Activated T-helper 1 cell treated with anti-CD3 and anti-CD28 coated beads, Interleukin-12 subunit alpha, Interleukin-12 subunit beta, Interleukin-2, Interleukin-4 antibody, amounts not matched to agents 30 ng/mL and 10 ng/mL and 1 ng/mL, durations not matched to agents 14 hours and 24 hours and 36 hours (primary cell): ENCODE measurements at regions of chr12 and their contacts with region 1.

Region 1: DNA sequence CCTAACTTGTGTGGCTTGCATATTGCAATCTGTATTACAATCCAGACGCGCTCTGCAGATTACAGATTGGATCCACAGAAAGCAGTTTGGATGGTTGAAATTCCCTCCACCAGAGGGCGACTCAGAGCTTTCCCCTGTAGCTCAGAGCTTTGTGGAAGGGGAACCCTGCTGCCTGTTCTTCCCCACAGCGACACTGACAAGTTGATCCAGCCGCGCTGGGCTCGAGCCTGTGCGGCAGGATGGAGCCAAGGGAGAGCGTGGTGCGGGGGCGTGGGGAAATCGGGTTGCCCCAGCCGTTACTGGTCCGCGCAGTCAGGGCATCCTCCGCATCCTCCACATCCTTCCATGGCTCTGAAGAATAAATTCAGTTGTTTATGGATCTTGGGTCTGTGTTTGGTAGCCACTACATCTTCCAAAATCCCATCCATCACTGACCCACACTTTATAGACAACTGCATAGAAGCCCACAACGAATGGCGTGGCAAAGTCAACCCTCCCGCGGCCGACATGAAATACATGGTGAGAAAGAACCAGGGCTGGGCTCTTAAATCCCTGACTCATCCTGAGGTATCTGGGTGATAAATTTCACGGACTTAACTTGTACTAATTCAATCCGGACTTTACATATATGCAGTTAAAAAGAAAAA is at the start of gene GLIPR1L1:
- DNase-seq: peak; percentile 67
- H3K4me3 Mint-ChIP-seq: peak within 1 kb of the TSS; percentile 70
- H3K27ac Mint-ChIP-seq: no peak within 1 kb of the TSS
- H3K4me1 Mint-ChIP-seq: peaks cover 36% of the 10 kb centered on the region
- H3K27me3 Mint-ChIP-seq: peaks cover 35% of the 10 kb centered on the region
- total RNA-seq, gene GLIPR1L1: not detected in 2 replicates

Region 2: GRCh38 chr12:74689071-74689655 is 645.3 kb before region 1 on chr12:
- intact Hi-C with region 1: loop called (anchors 1 kb)
- DNase-seq: no peak
- H3K4me3 Mint-ChIP-seq: no peak overlapping the region
- H3K27ac Mint-ChIP-seq: no peak overlapping the region
- H3K4me1 Mint-ChIP-seq: no peaks in the 10 kb centered on the region
- H3K27me3 Mint-ChIP-seq: peaks cover 2% of the 10 kb centered on the region

Region 3: GRCh38 chr12:74945771-74946198 is 388.7 kb before region 1 on chr12:
- intact Hi-C with region 1: no loop called
- DNase-seq: no peak
- H3K4me3 Mint-ChIP-seq: no peak overlapping the region
- H3K27ac Mint-ChIP-seq: no peak overlapping the region
- H3K4me1 Mint-ChIP-seq: peaks cover 8% of the 10 kb centered on the region
- H3K27me3 Mint-ChIP-seq: no peaks in the 10 kb centered on the region

Region 4: DNA sequence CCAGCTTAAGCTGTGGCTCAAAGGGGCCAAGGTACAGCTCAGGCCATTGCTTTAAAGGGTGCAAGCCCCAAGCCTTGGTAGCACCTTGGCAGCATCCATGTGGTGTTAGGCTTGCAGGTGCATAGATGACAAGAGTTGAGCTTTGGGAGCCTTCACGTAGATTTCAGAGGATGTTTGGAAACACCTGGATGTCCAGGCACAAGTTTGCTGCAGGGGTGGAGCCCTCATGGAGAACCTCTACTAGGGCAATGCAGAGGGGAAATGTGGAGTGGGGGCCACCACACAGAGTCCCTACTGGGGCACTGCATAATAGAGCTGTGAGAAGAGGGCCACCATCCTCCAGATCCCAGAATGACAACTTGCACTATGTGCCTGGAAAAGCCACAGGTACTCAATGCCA is 94.3 kb after region 1 on chr12:
- intact Hi-C with region 1: no loop called
- DNase-seq: no peak
- H3K4me3 Mint-ChIP-seq: no peak overlapping the region
- H3K27ac Mint-ChIP-seq: no peak overlapping the region
- H3K4me1 Mint-ChIP-seq: no peaks in the 10 kb centered on the region
- H3K27me3 Mint-ChIP-seq: peaks cover 2% of the 10 kb centered on the region

Region 5: GRCh38 chr12:75505706-75506312 is 171.3 kb after region 1 on chr12:
- intact Hi-C with region 1: loop called (anchors 1 kb)
- DNase-seq: no peak
- H3K4me3 Mint-ChIP-seq: no peak overlapping the region
- H3K27ac Mint-ChIP-seq: no peak overlapping the region
- H3K4me1 Mint-ChIP-seq: peaks cover 48% of the 10 kb centered on the region
- H3K27me3 Mint-ChIP-seq: no peaks in the 10 kb centered on the region

Region 6: DNA sequence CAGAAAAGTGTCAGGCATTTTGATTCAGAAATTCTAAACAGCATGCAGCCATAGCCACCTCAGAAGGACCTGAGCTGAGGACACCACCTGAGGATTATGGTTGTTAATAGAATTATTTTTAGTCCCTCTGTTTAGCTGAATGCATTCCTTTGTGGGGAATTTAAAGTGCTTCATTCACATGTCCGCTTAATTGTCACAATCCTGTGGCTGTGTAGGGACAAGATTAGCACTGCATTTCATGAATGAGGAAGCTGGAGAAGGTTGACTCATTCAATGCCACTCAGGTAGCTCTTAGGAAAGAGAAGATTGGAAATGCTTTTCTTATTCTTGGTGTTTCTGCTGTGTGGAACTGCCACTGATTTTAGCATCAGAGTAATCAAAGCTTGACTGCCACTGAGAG is 218.9 kb after region 1 on chr12:
- intact Hi-C with region 1: no loop called
- DNase-seq: no peak
- H3K4me3 Mint-ChIP-seq: no peak overlapping the region
- H3K27ac Mint-ChIP-seq: no peak overlapping the region
- H3K4me1 Mint-ChIP-seq: no peaks in the 10 kb centered on the region
- H3K27me3 Mint-ChIP-seq: peaks cover 21% of the 10 kb centered on the region

Region 7: GRCh38 chr12:75722714-75723200 is 388.2 kb after region 1 on chr12:
- intact Hi-C with region 1: loop called (anchors 10 kb)
- DNase-seq: peak; percentile 29
- H3K4me3 Mint-ChIP-seq: peak overlapping the region; percentile 37
- H3K27ac Mint-ChIP-seq: peak overlapping the region; percentile 81
- H3K4me1 Mint-ChIP-seq: peaks cover 16% of the 10 kb centered on the region
- H3K27me3 Mint-ChIP-seq: peaks cover 3% of the 10 kb centered on the region

Region 8: GRCh38 chr12:76455582-76456345 is 1121.3 kb after region 1 on chr12:
- intact Hi-C with region 1: loop called (anchors 1 kb)
- DNase-seq: peak; percentile 5
- H3K4me3 Mint-ChIP-seq: no peak overlapping the region
- H3K27ac Mint-ChIP-seq: no peak overlapping the region
- H3K4me1 Mint-ChIP-seq: peaks cover 15% of the 10 kb centered on the region
- H3K27me3 Mint-ChIP-seq: no peaks in the 10 kb centered on the region